ENCODE measurements at regions of chr3 and their contacts with region 1.

Region 1: GRCh38 chr3:50321336-50322114 is 1.0 kb downstream of the HYAL2 start:
- DNase-seq: peak; percentile 92 to 94
- H3K4me3 ChIP-seq: peak overlapping the region; percentile 58
- H3K4me3 Mint-ChIP-seq: peak overlapping the region; percentile 81
- H3K27ac Mint-ChIP-seq: peak overlapping the region; percentile 96
- H3K4me1 ChIP-seq: peaks cover 33% of the 10 kb centered on the region
- H3K4me1 Mint-ChIP-seq: peaks cover 6% of the 10 kb centered on the region
- H3K27me3 ChIP-seq: no peaks in the 10 kb centered on the region
- H3K27me3 Mint-ChIP-seq: no peaks in the 10 kb centered on the region
- CTCF ChIP-seq: peak; percentile 67 to 68

Region 2: DNA sequence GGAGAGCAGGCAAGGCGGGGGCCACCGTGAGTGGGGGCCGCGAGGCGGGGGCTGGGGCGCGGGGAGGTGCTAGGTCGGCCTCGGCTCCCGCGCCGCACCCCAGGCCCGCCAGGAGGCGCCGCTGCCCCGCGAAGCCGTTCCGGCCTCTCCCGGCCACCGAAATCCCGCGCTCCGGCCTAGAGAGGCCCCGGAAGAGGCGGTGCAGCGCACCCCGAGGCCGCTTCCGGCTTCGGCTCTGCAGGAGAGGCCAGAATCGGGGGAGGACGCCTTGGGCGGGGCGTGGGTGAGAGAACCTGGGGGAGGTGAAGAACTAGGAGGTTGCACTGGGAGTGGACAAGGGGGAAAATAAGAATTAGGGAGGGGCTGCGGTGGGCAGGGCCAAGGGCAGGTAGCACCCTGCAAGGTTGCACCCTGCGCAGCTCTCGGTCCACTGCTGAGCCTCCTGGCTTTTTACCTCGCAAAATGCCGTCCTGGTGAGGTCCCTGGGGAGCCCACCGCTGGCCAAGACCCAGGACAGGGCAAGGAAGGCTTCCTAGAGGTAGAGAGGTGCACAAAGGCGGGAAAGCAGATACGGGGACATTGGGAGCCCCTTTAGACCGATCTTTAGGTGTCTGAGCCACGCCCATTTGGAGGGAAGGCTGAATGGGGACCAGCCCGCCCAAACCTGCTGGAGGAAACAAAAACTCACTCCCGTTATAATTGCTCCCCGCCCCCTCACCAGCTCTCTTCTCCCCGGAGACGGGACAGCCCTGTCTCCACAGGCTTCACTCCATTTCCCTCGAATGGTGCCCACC is 93.9 kb before region 1 on chr3:
- CTCF ChIA-PET with region 1: no interaction called
- POLR2A ChIA-PET with region 1: no interaction called
- intact Hi-C with region 1: loop called (anchors 2 kb)
- DNase-seq: peak; percentile 97
- H3K4me3 ChIP-seq: peak overlapping the region; percentile 72
- H3K4me3 Mint-ChIP-seq: peak overlapping the region; percentile 78
- H3K27ac Mint-ChIP-seq: peak overlapping the region; percentile 78
- H3K4me1 ChIP-seq: peaks cover 6% of the 10 kb centered on the region; the same call in 1 of the 2 replicates
- H3K4me1 Mint-ChIP-seq: no peaks in the 10 kb centered on the region
- H3K27me3 ChIP-seq: no peaks in the 10 kb centered on the region
- H3K27me3 Mint-ChIP-seq: no peaks in the 10 kb centered on the region
- CTCF ChIP-seq: peak; percentile 62 to 82

Region 3: DNA sequence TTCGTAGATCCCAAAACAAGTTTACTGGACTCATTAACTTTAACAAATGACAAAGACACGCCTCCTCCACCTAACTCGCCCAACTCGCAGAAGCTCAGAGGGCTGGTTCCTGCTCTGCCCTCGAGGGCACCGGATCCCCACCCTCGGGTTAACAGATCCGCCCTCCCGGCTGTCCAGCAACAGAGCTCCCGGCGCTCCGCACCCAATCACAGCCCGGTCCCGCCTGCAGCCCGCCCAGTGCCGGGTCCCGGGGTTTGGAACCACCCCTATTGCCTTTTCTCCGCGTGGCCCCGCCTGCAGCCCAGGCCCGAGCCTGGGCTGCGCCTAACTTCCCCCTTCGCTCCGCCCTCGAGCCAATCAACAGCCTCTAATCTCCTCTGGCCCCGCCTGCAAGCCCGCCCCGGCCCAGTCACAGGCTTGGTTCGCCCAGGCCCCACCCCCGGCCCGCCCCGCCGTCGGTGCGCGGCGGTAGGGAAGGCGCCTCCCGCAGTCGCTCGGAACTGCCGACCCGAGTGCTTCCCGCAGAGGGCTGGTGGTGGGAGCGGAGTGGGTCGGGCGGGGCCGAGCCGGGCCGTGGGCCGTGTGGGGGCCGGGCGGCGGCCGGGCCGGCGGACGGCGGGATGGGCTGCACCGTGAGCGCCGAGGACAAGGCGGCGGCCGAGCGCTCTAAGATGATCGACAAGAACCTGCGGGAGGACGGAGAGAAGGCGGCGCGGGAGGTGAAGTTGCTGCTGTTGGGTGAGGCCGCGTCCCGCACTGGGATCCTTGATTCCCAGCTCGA is 85.6 kb before region 1 on chr3 and contains the start of gene GNAI2:
- CTCF ChIA-PET with region 1: interaction called, 10 read pairs
- POLR2A ChIA-PET with region 1: no interaction called
- intact Hi-C with region 1: no loop called
- DNase-seq: peak; percentile 98 to 99
- H3K4me3 ChIP-seq: peak within 1 kb of the TSS; percentile 52
- H3K4me3 Mint-ChIP-seq: peak within 1 kb of the TSS; percentile 94
- H3K27ac Mint-ChIP-seq: peak within 1 kb of the TSS; percentile 82
- H3K4me1 ChIP-seq: peaks cover 23% of the 10 kb centered on the region
- H3K4me1 Mint-ChIP-seq: peaks cover 13% of the 10 kb centered on the region
- H3K27me3 ChIP-seq: no peaks in the 10 kb centered on the region
- H3K27me3 Mint-ChIP-seq: no peaks in the 10 kb centered on the region
- CTCF ChIP-seq: no peak
- total RNA-seq, gene GNAI2: 59.3 and 62.0 TPM in 2 replicates

Region 4: GRCh38 chr3:50272911-50273693 is 48.4 kb before region 1 on chr3:
- CTCF ChIA-PET with region 1: no interaction called
- POLR2A ChIA-PET with region 1: no interaction called
- intact Hi-C with region 1: loop called (anchors 1 kb)
- DNase-seq: peak; percentile 80 to 92
- H3K4me3 ChIP-seq: no peak overlapping the region
- H3K4me3 Mint-ChIP-seq: no peak overlapping the region
- H3K27ac Mint-ChIP-seq: peak overlapping the region; percentile 45
- H3K4me1 ChIP-seq: peaks cover 55% of the 10 kb centered on the region
- H3K4me1 Mint-ChIP-seq: peaks cover 33% of the 10 kb centered on the region
- H3K27me3 ChIP-seq: no peaks in the 10 kb centered on the region
- H3K27me3 Mint-ChIP-seq: no peaks in the 10 kb centered on the region
- CTCF ChIP-seq: peak; percentile 92 to 97

Region 5: DNA sequence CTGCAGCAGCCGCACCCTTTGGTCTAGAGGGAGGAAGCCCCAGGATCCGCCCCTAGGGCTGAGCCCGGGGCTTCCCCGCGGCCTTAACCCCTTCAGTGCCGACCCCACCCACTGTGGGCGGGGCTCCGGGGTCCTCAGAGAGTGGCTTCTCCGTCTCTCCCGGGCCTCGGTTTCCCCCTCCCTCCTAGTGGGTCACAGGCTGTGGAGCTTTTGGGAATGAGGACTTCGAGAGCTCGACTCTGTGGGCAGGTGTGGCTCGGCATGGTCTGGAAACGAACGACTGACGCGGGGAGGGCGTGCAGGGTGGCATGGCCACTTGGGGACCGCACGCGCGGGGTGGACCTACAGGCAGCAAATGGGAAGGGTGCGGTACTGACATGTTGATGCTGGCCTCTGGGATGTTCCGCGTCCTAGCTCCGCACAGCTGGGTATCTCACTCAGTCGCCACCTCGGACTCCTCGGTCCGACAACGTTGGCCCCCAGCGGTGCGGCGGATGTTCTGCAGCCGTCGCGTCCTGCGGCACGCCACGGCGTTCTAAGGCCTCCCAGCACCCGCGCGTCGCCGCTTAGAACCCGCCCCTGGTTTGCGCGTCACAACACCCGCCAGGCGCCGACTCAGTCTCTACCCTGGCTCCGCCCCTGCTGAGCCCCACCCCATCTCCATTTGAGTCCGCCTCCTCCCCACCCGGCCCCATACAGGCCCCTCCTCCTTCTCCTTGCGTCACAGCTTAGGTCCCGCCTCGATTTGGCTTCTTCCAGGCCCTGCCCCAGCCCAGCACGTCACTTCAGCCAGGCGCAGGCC is 22.5 kb before region 1 on chr3 and contains the starts of genes HYAL3 and NAA80:
- CTCF ChIA-PET with region 1: interaction called, 12 read pairs
- POLR2A ChIA-PET with region 1: interaction called, 12 read pairs
- intact Hi-C with region 1: loop called (anchors 1 kb)
- DNase-seq: peak; percentile 99
- H3K4me3 ChIP-seq: peak within 1 kb of the TSS; percentile 47
- H3K4me3 Mint-ChIP-seq: peak within 1 kb of the TSS; percentile 97
- H3K27ac Mint-ChIP-seq: peak within 1 kb of the TSS; percentile 95
- H3K4me1 ChIP-seq: peaks cover 20% of the 10 kb centered on the region
- H3K4me1 Mint-ChIP-seq: peaks cover 11% of the 10 kb centered on the region
- H3K27me3 ChIP-seq: no peaks in the 10 kb centered on the region
- H3K27me3 Mint-ChIP-seq: no peaks in the 10 kb centered on the region
- CTCF ChIP-seq: peak; percentile 15 to 26
- total RNA-seq, gene HYAL3: 5.2 and 6.8 TPM in 2 replicates
- total RNA-seq, gene NAA80: 6.7 and 8.2 TPM in 2 replicates

Region 6: GRCh38 chr3:50337191-50337841 is 15.8 kb after region 1 on chr3:
- CTCF ChIA-PET with region 1: interaction called, 27 read pairs
- POLR2A ChIA-PET with region 1: interaction called, 9 read pairs
- intact Hi-C with region 1: no loop called
- DNase-seq: peak; percentile 99
- H3K4me3 ChIP-seq: peak overlapping the region; percentile 63
- H3K4me3 Mint-ChIP-seq: peak overlapping the region; percentile 94
- H3K27ac Mint-ChIP-seq: peak overlapping the region; percentile 95
- H3K4me1 ChIP-seq: peaks cover 16% of the 10 kb centered on the region
- H3K4me1 Mint-ChIP-seq: peaks cover 11% of the 10 kb centered on the region
- H3K27me3 ChIP-seq: no peaks in the 10 kb centered on the region
- H3K27me3 Mint-ChIP-seq: no peaks in the 10 kb centered on the region
- CTCF ChIP-seq: no peak